ENCODE measurements at regions of chr1 and their contacts with region 1.

Region 1: GRCh38 chr1:33228935-33229487 is 27.3 kb upstream of the ZNF362 start:
- DNase-seq: no peak
- ATAC-seq: no peak
- H3K4me3 ChIP-seq: no peak overlapping the region
- H3K27ac ChIP-seq: no peak overlapping the region
- H3K4me1 ChIP-seq: no peaks in the 10 kb centered on the region
- H3K27me3 ChIP-seq: peaks cover 4% of the 10 kb centered on the region; the same call in 1 of the 2 replicates
- CTCF ChIP-seq: no peak

Region 2: GRCh38 chr1:33256701-33257399 is 27.8 kb after region 1 on chr1:
- CTCF ChIA-PET with region 1: no interaction called
- POLR2A ChIA-PET with region 1: interaction called, 10 read pairs
- in situ Hi-C with region 1: no loop called
- intact Hi-C with region 1: no loop called
- DNase-seq: peak; percentile 36
- ATAC-seq: peak; percentile 73
- H3K4me3 ChIP-seq: peak overlapping the region; percentile 67 to 77
- H3K27ac ChIP-seq: peak overlapping the region; percentile 66
- H3K4me1 ChIP-seq: peaks cover 11% of the 10 kb centered on the region
- H3K27me3 ChIP-seq: no peaks in the 10 kb centered on the region
- CTCF ChIP-seq: no peak

Region 3: GRCh38 chr1:33286451-33287185 is 57.6 kb after region 1 on chr1:
- CTCF ChIA-PET with region 1: interaction called, 15 read pairs
- POLR2A ChIA-PET with region 1: no interaction called
- in situ Hi-C with region 1: no loop called
- intact Hi-C with region 1: no loop called
- DNase-seq: no peak
- ATAC-seq: no peak
- H3K4me3 ChIP-seq: no peak overlapping the region
- H3K27ac ChIP-seq: no peak overlapping the region
- H3K4me1 ChIP-seq: no peaks in the 10 kb centered on the region
- H3K27me3 ChIP-seq: no peaks in the 10 kb centered on the region
- CTCF ChIP-seq: no peak

Measured in Panc1 (cell line).